ENCODE measurements at regions of chr3 and their contacts with region 1.

Region 1: DNA sequence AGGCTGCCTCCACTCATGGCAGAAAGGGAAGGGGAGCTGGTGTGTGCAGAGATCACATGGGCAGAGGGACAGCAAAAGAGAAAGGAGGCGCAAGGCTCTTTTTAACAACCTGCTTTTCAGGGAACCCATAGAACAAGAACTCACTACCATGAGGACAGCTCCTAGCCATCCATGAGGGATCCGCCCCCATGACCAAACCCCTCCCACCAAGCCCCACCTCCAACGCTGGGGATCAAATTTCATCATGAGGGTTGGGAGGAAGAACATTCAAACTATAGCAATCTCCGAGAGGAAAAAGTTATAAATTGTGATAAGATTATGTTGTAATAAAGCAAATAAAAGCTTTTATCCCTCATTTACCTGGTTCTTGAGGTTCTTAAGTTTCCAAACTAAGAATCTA is 84.7 kb upstream of the LMCD1 start:
- DNase-seq: peak; percentile 39
- H3K4me3 ChIP-seq: no peak overlapping the region
- H3K27ac ChIP-seq: no peak overlapping the region
- H3K4me1 ChIP-seq: no peaks in the 10 kb centered on the region
- H3K27me3 ChIP-seq: no peaks in the 10 kb centered on the region
- CTCF ChIP-seq: no peak
- POLR2A ChIP-seq: no peak

Region 2: GRCh38 chr3:8233938-8234337 is 183.0 kb before region 1 on chr3:
- CTCF ChIA-PET with region 1: no interaction called
- POLR2A ChIA-PET with region 1: no interaction called
- dilution Hi-C with region 1: no loop called
- intact Hi-C with region 1: no loop called
- DNase-seq: no peak
- H3K4me3 ChIP-seq: no peak overlapping the region
- H3K27ac ChIP-seq: no peak overlapping the region
- H3K4me1 ChIP-seq: no peaks in the 10 kb centered on the region
- H3K27me3 ChIP-seq: no peaks in the 10 kb centered on the region
- CTCF ChIP-seq: no peak
- POLR2A ChIP-seq: no peak

Region 3: DNA sequence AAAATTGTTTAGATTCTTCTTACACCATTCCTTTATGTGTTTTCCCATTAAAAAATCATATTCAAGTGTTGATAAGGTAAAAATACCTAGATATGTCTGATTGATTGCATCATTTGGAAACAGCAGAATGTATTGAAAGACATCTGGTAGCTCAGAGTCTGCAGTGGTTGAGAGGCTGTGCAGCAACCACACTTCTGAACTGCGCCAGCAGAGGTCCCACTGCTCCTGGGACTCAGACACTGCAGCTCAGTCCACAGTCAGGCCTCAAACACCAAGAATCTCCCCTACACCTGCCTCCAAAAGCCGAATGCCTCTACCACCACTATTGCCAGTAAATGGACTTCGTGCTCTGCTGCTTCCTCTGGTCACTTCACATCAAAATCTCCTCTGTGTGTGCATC is 92.2 kb before region 1 on chr3:
- CTCF ChIA-PET with region 1: interaction called, 67 read pairs
- POLR2A ChIA-PET with region 1: no interaction called
- dilution Hi-C with region 1: no loop called
- intact Hi-C with region 1: loop called (anchors 1 kb)
- DNase-seq: peak; percentile 21
- H3K4me3 ChIP-seq: no peak overlapping the region
- H3K27ac ChIP-seq: no peak overlapping the region
- H3K4me1 ChIP-seq: peaks cover under 1% of the 10 kb centered on the region
- H3K27me3 ChIP-seq: peaks cover 0 to 2% of the 10 kb centered on the region in 2 experiments
- CTCF ChIP-seq: peak in 1 of 2 donors; percentile 60
- POLR2A ChIP-seq: no peak

Region 4: DNA sequence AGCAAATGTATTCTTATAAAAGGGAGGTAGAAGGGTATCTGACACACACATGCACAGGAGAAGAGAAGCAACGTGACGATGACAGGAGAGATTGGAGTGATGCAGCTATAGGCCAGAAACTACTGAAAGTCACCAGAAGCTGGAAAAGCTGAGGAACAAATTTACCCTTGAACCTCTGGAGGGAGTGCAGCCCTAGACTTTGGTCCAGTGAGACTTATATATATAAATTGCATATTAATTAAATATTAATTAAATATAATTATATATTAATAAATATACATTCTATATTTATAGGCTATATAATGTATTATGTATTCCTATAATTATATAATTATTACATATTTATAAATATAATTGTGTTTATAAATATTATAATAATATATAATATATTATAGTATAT is 11.8 kb before region 1 on chr3:
- CTCF ChIA-PET with region 1: interaction called, 13 read pairs
- POLR2A ChIA-PET with region 1: no interaction called
- dilution Hi-C with region 1: no loop called
- intact Hi-C with region 1: no loop called
- DNase-seq: no peak
- H3K4me3 ChIP-seq: no peak overlapping the region
- H3K27ac ChIP-seq: no peak overlapping the region
- H3K4me1 ChIP-seq: no peaks in the 10 kb centered on the region
- H3K27me3 ChIP-seq: no peaks in the 10 kb centered on the region
- CTCF ChIP-seq: no peak
- POLR2A ChIP-seq: no peak

Region 5: GRCh38 chr3:8436718-8437184 is 19.8 kb after region 1 on chr3:
- CTCF ChIA-PET with region 1: interaction called, 12 read pairs
- POLR2A ChIA-PET with region 1: no interaction called
- dilution Hi-C with region 1: no loop called
- intact Hi-C with region 1: no loop called
- DNase-seq: no peak
- H3K4me3 ChIP-seq: no peak overlapping the region
- H3K27ac ChIP-seq: no peak overlapping the region
- H3K4me1 ChIP-seq: no peaks in the 10 kb centered on the region
- H3K27me3 ChIP-seq: no peaks in the 10 kb centered on the region
- CTCF ChIP-seq: no peak
- POLR2A ChIP-seq: no peak

Region 6: DNA sequence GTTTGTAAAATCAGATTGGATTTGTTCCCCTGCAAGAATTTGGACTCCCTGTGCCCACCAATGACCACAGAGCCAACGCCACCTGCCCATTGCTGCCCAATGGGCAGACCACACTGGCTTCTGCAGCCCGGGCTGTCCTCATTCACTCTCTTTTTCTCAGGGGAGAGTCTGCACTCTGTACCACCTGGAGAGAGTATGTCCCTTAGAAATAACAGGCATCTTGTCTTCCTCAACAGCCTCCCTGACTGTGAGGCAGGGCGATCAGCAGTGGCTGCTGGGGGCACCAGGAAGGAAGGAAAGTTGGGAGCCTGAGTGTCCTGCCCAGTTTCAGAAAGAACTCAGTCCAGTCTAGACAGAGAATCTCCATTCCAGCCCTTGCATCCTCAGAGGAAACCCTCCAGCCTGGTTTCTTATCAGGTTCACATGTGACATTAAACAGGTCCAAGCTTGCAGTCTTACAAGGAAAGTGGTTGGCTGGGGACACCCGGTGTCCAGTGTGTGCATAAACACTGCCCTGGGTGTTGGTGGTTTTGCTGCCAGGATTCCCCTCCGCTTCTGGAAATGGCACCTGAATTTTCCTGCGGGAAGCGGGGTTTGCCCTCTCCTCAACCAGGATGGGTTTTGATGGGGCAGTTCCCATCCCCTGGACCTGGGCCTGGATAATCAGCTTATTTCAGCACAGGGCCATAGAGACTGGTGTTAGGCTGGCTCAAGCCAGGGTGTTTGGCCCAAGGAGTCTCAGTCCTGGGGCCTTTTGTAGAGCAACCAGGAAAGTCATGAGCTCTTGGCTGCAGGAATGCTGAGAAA is 190.5 kb after region 1 on chr3:
- CTCF ChIA-PET with region 1: interaction called, 10 read pairs
- POLR2A ChIA-PET with region 1: no interaction called
- dilution Hi-C with region 1: no loop called
- intact Hi-C with region 1: no loop called
- DNase-seq: peak; percentile 78
- H3K4me3 ChIP-seq: no peak overlapping the region
- H3K27ac ChIP-seq: no peak overlapping the region
- H3K4me1 ChIP-seq: no peaks in the 10 kb centered on the region
- H3K27me3 ChIP-seq: peaks cover 0 to 2% of the 10 kb centered on the region in 2 experiments
- CTCF ChIP-seq: peak; percentile 54 to 79
- POLR2A ChIP-seq: no peak

Region 7: DNA sequence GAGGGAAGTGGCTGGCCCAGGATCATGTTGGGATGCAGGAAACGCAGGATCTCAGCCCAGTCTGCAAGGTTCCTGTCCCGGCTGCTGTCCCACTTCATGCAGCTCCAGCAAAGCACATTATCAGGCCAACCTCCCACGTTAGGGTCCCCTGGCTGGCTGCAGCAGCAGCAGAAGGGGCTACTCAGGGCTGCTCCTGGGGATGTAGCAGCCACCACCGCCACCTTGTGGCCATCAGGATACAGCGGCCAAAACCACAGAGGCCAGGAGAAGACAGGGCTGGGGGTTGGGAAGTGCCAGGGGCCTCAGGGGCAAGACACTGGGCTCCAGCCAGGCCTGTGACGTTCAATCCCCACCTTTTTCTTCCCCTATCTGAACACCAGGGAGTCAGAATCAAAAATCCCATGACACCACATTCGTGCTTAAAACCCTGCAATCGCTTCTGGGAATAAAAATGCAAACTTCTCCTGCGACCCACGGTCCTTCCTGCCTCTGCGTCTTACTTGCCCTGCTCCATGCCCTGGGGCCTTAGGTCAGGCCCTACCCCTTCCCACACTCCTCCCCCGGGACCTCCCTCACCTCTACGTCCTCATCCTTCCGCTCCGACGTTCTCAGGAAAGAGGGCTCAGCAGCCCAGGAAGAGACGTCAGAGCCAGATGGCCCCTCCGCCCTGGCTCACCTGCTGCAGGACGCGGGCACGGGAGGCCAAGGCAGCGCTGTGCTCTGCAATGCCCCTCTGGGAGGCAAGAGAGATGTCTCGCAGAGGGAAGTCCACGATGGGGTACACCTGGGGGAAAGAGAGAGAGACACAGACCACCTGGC is 206.1 kb after region 1 on chr3:
- CTCF ChIA-PET with region 1: interaction called, 7 read pairs
- POLR2A ChIA-PET with region 1: no interaction called
- dilution Hi-C with region 1: no loop called
- intact Hi-C with region 1: loop called (anchors 2 kb)
- DNase-seq: peak; percentile 63
- H3K4me3 ChIP-seq: no peak overlapping the region
- H3K27ac ChIP-seq: no peak overlapping the region
- H3K4me1 ChIP-seq: peaks cover 4% of the 10 kb centered on the region
- H3K27me3 ChIP-seq: no peaks in the 10 kb centered on the region
- CTCF ChIP-seq: peak; percentile 75 to 96
- POLR2A ChIP-seq: no peak

Region 8: DNA sequence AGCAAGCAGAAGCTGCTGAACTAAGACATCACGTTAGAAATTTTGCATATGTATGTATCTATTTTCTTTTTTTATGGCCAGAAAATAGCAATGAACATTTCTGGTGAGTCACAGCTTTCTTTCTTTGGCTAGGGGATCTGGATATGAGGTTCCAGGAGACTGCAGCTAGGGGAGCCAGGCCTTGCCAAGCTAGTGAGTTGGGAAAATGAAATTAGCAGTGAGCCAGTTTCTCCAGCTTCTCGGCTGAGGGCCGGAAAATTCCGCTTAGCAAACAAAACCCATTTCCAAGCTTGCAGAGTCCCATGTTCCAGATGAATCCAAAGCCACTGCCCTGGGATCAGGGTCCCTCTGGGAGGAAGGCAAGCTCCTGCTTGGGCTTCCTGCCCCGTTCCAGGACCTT is 694.9 kb after region 1 on chr3:
- CTCF ChIA-PET with region 1: no interaction called
- POLR2A ChIA-PET with region 1: no interaction called
- dilution Hi-C with region 1: no loop called
- intact Hi-C with region 1: no loop called
- DNase-seq: no peak
- H3K4me3 ChIP-seq: no peak overlapping the region
- H3K27ac ChIP-seq: no peak overlapping the region
- H3K4me1 ChIP-seq: no peaks in the 10 kb centered on the region
- H3K27me3 ChIP-seq: no peaks in the 10 kb centered on the region
- CTCF ChIP-seq: no peak
- POLR2A ChIP-seq: no peak

Measured in endothelial cell of umbilical vein (primary cell).